Panc1 (cell line): ENCODE measurements at regions of chr10 and their contacts with region 1.

Region 1: DNA sequence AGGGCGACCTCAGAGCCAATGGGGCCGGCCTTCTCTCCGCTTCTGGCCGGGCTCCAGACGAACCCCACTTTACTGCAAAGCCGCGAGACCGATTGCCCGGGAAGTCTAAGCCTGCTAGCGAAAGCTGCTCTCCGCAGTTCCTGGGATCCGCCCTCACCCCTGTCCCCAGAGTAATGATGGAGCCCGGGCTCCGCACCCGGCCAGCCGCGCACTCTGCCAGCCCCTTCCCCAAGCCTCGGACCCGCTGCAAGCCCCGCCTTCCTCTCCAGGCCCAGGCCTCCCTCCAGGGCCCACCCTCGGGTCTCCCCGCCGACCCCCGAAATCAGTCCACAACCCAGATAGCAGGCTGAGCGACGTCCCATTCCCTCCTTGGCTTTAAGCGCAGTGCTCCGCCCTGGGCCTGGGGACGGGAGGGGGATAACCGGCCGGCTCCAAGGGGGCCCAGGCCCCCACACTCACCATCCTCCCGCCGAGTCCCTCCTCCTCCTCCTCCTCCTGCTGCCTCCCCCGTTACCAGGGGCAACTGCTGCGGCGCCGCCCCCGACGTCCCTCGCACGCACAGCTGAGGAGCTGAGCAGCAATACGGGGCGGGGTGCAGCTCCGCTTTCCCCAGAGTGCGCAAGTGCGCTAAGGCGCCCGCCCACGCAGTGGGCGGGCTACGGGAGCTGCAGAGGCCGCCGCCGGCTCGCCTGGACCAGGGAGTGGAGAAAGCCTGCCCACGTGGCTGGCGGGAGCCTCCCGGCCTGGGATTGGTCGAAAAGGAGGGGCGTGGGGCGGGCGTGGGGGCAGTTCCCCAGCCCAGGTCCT is at the start of gene ARL3:
- DNase-seq: peak; percentile 85
- ATAC-seq: peak; percentile 96
- H3K4me3 ChIP-seq: peak within 1 kb of the TSS; percentile 68 to 82
- H3K27ac ChIP-seq: peak within 1 kb of the TSS; percentile 93
- H3K4me1 ChIP-seq: peaks cover 37% of the 10 kb centered on the region
- H3K27me3 ChIP-seq: no peaks in the 10 kb centered on the region
- CTCF ChIP-seq: no peak; the same call in 1 of the 2 replicates
- total RNA-seq, gene ARL3: 20.7 TPM

Region 2: GRCh38 chr10:102546606-102547320 is 167.3 kb before region 1 on chr10:
- CTCF ChIA-PET with region 1: no interaction called
- POLR2A ChIA-PET with region 1: interaction called, 14 read pairs
- in situ Hi-C with region 1: no loop called
- intact Hi-C with region 1: no loop called
- DNase-seq: no peak
- ATAC-seq: no peak
- H3K4me3 ChIP-seq: no peak overlapping the region
- H3K27ac ChIP-seq: no peak overlapping the region
- H3K4me1 ChIP-seq: no peaks in the 10 kb centered on the region
- H3K27me3 ChIP-seq: no peaks in the 10 kb centered on the region
- CTCF ChIP-seq: no peak